ENCODE measurements at regions of chr1 and their contacts with region 1.

Region 1: DNA sequence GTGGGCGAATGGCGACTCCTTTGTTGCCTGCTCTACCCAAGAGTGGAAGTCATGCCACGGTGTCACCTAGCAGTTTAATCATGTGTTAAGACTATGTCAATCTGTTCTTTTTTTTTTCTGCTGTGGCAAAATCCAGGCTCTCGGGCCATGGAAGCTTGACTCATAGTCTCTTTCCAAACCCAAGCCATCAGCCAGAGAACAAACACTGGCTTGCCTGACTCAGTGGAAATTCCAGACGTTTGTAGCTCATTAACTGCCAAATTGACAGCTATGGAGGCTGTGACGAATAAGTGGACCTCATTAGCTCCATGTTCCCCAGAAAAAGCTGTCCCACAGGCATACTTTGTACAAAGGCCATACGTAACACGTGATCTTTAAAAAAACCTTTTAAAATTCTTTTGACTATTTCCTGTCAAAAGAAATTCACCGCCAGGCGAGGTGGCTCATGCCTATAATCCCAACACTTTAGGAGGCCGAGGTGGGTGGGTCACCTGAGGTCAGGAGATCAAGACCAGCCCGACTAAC is 8.0 kb upstream of the PNRC2 start:
- DNase-seq: no peak
- H3K4me3 Mint-ChIP-seq: no peak overlapping the region
- H3K27ac Mint-ChIP-seq: no peak overlapping the region
- H3K4me1 Mint-ChIP-seq: peaks cover 20% of the 10 kb centered on the region
- H3K27me3 Mint-ChIP-seq: no peaks in the 10 kb centered on the region

Region 2: DNA sequence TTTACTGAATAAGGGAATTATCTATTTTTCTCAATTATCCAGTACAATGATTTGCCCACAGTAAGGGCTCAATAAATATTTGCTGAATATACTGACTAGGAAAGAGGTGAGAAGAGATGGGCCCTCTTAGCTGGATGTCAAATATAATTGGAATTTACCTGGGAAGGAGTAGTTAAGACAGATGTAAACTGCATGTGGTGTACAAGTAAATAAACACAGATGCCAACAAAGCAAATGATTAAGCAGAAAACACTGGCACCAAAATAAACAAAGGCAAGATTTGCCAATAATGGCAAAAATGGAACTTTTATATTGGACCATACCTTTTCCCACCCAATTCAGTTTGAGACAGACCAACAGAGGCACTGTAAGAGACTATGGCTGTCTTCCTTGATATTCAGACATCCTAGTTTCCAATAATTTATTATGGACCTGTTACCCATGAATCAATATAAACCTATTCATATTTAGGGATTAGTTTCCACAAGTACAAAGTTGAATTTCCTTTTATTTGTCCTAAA is 15.4 kb after region 1 on chr1:
- CTCF ChIA-PET with region 1: no interaction called
- intact Hi-C with region 1: no loop called
- DNase-seq: no peak
- H3K4me3 Mint-ChIP-seq: no peak overlapping the region
- H3K27ac Mint-ChIP-seq: peak overlapping the region; percentile 58
- H3K4me1 Mint-ChIP-seq: peaks cover 68% of the 10 kb centered on the region
- H3K27me3 Mint-ChIP-seq: no peaks in the 10 kb centered on the region

Region 3: DNA sequence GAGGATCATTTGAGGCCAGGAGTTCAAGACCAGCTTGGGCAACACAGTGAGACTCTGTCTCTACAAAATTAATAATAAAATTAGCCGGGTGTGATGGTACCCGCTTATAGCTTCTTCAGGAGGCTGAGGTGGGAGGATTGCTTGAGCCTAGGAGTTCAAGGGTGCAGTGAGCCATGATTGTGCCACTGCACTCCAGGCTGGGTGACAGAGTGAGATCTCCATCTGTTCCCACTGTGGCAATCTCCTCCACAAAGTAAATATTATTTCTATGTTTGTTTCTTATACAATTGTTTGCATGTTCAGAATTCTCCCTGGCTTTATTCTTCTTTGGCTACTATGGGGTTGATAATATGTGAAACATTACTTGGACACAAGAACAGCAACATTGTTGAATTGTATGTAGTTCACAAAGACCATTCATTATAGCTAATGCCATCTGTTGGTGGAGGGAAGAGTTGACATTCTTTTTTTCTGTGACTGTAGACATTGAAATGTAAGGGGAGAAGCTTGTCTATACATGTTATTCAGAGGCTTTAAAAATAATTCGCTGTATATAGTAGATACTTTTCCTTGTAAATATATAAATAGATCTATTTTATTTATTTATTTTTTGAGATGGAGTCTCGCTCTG is 76.3 kb after region 1 on chr1:
- CTCF ChIA-PET with region 1: interaction called, 5 read pairs
- intact Hi-C with region 1: loop called (anchors 1 kb)
- DNase-seq: no peak
- H3K4me3 Mint-ChIP-seq: no peak overlapping the region
- H3K27ac Mint-ChIP-seq: no peak overlapping the region
- H3K4me1 Mint-ChIP-seq: no peaks in the 10 kb centered on the region
- H3K27me3 Mint-ChIP-seq: no peaks in the 10 kb centered on the region